B cell (primary cell): ENCODE measurements at regions of chr7 and their contacts with region 1.

Region 1: GRCh38 chr7:151172273-151173141 is 5.0 kb upstream of the GBX1 start:
- DNase-seq: peak; percentile 83
- ATAC-seq: peak; percentile 87
- H3K4me3 ChIP-seq: no peak overlapping the region
- H3K4me3 Mint-ChIP-seq: no peak overlapping the region
- H3K27ac ChIP-seq: no peak overlapping the region
- H3K27ac Mint-ChIP-seq: no peak overlapping the region
- H3K4me1 ChIP-seq: peaks cover 2 to 7% of the 10 kb centered on the region in 2 donors
- H3K4me1 Mint-ChIP-seq: peaks cover 13% of the 10 kb centered on the region
- H3K27me3 ChIP-seq: peaks cover 0 to 51% (median 22%) of the 10 kb centered on the region in 4 experiments
- H3K27me3 Mint-ChIP-seq: peaks cover 53% of the 10 kb centered on the region
- CTCF ChIP-seq: peak; percentile 100

Region 2: GRCh38 chr7:151104411-151105235 is 67.9 kb before region 1 on chr7:
- CTCF ChIA-PET with region 1: no interaction called
- POLR2A ChIA-PET with region 1: no interaction called
- intact Hi-C with region 1: no loop called
- DNase-seq: no peak
- ATAC-seq: no peak
- H3K4me3 ChIP-seq: no peak overlapping the region
- H3K4me3 Mint-ChIP-seq: no peak overlapping the region
- H3K27ac ChIP-seq: no peak overlapping the region
- H3K27ac Mint-ChIP-seq: no peak overlapping the region
- H3K4me1 ChIP-seq: no peaks in the 10 kb centered on the region
- H3K4me1 Mint-ChIP-seq: no peaks in the 10 kb centered on the region
- H3K27me3 ChIP-seq: peaks cover 0 to 2% (median 0%) of the 10 kb centered on the region in 4 experiments
- H3K27me3 Mint-ChIP-seq: peaks cover 10% of the 10 kb centered on the region
- CTCF ChIP-seq: no peak

Region 3: DNA sequence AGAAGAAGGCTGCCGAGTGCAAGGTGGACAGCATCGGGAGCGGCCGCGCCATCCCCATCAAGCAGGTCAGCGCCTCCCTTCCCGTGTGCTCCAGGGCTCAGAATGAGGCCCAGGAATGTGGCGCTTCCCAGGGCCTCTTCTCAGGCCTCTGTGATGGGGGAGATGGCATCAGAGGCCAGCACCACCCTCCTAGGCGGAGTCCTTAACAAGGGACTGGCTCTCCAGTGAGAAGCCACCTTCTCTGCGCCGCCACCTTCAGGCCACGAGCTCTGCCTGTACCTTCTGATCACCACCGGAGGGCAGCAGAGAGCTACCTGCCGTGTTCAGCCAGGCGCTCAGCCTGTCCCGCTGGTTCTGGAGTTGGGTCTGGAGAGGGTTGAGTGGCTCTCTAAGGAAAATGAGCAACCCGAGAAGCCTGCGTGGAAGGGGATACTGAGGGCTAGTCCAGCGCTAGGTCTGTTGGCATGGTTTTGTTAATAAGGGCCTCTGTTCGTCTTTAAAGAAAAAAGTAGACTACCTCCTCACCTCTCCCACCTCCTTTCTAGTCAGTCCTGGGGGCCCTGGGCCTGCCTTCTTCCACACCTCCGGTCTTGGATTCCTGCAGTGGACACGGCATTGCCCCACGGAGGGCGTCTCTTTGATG is 48.6 kb before region 1 on chr7:
- CTCF ChIA-PET with region 1: interaction called, 5 read pairs
- POLR2A ChIA-PET with region 1: no interaction called
- intact Hi-C with region 1: loop called (anchors 1 kb)
- DNase-seq: peak; percentile 85
- ATAC-seq: peak; percentile 98
- H3K4me3 ChIP-seq: no peak overlapping the region
- H3K4me3 Mint-ChIP-seq: no peak overlapping the region
- H3K27ac ChIP-seq: no peak overlapping the region
- H3K27ac Mint-ChIP-seq: no peak overlapping the region
- H3K4me1 ChIP-seq: peaks cover 0 to 6% of the 10 kb centered on the region in 2 donors
- H3K4me1 Mint-ChIP-seq: peaks cover 3% of the 10 kb centered on the region
- H3K27me3 ChIP-seq: no peaks in the 10 kb centered on the region
- H3K27me3 Mint-ChIP-seq: peaks cover 3% of the 10 kb centered on the region
- CTCF ChIP-seq: peak; percentile 93

Region 4: GRCh38 chr7:151157645-151158329 is 14.7 kb before region 1 on chr7:
- CTCF ChIA-PET with region 1: interaction called, 10 read pairs
- POLR2A ChIA-PET with region 1: no interaction called
- intact Hi-C with region 1: no loop called
- DNase-seq: no peak
- ATAC-seq: no peak
- H3K4me3 ChIP-seq: no peak overlapping the region
- H3K4me3 Mint-ChIP-seq: no peak overlapping the region
- H3K27ac ChIP-seq: no peak overlapping the region
- H3K27ac Mint-ChIP-seq: no peak overlapping the region
- H3K4me1 ChIP-seq: no peaks in the 10 kb centered on the region
- H3K4me1 Mint-ChIP-seq: no peaks in the 10 kb centered on the region
- H3K27me3 ChIP-seq: peaks cover 0 to 20% (median 12%) of the 10 kb centered on the region in 4 experiments
- H3K27me3 Mint-ChIP-seq: peaks cover 32% of the 10 kb centered on the region
- CTCF ChIP-seq: no peak

Region 5: GRCh38 chr7:151232091-151232916 is 59.8 kb after region 1 on chr7 and contains the start of gene CHPF2:
- CTCF ChIA-PET with region 1: no interaction called
- POLR2A ChIA-PET with region 1: no interaction called
- intact Hi-C with region 1: loop called (anchors 2 kb)
- DNase-seq: peak; percentile 91
- ATAC-seq: peak; percentile 94
- H3K4me3 ChIP-seq: peak within 1 kb of the TSS; percentile 64 to 96 (median 93)
- H3K4me3 Mint-ChIP-seq: peak within 1 kb of the TSS; percentile 99
- H3K27ac ChIP-seq: peak within 1 kb of the TSS; percentile 53 to 68
- H3K27ac Mint-ChIP-seq: peak within 1 kb of the TSS; percentile 97
- H3K4me1 ChIP-seq: peaks cover 22 to 30% of the 10 kb centered on the region in 2 donors
- H3K4me1 Mint-ChIP-seq: peaks cover 43% of the 10 kb centered on the region
- H3K27me3 ChIP-seq: no peaks in the 10 kb centered on the region
- H3K27me3 Mint-ChIP-seq: no peaks in the 10 kb centered on the region
- CTCF ChIP-seq: no peak
- total RNA-seq, gene CHPF2: 39.4 and 44.0 TPM in 2 replicates

Region 6: DNA sequence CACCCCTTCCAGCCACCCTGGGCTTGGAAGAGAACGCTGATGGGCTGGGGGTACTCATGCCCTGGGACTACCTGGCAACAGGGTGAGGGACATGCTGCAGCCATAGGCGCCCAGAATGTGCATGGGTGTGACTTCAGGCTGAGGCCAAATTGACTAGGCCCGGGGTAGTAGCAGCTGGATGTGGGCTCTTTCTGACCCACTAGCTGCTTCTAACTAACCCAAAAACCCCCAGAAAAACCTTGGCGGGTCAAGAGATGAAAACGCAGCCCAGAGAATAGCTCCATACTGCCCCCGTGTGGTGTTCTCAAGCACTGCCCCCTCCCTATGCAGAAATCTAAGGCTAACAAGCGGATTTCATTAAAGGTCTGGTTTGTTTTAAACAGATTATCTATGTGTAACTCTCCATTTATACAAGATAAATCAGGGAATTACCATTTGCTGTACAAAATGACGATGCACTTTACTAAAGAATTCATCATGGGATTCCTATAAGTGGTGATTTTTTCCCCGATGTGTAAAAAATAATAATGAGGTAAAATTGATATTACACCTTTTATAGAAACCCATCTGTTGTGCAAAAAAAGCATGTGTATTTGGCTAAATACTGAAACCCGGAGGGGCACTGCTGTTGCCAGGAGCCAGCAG is 71.8 kb after region 1 on chr7:
- CTCF ChIA-PET with region 1: interaction called, 4 read pairs
- POLR2A ChIA-PET with region 1: no interaction called
- intact Hi-C with region 1: loop called (anchors 2 kb)
- DNase-seq: peak; percentile 68
- ATAC-seq: peak; percentile 12
- H3K4me3 ChIP-seq: peak overlapping the region in 3 of 5 experiments; percentile 47 to 55 (median 51)
- H3K4me3 Mint-ChIP-seq: peak overlapping the region; percentile 81
- H3K27ac ChIP-seq: no peak overlapping the region
- H3K27ac Mint-ChIP-seq: no peak overlapping the region
- H3K4me1 ChIP-seq: peaks cover 41 to 47% of the 10 kb centered on the region in 2 donors
- H3K4me1 Mint-ChIP-seq: peaks cover 41% of the 10 kb centered on the region
- H3K27me3 ChIP-seq: peaks cover 0 to 40% (median 17%) of the 10 kb centered on the region in 4 experiments
- H3K27me3 Mint-ChIP-seq: peaks cover 9% of the 10 kb centered on the region
- CTCF ChIP-seq: peak; percentile 79

Region 7: GRCh38 chr7:151304856-151305255 is 132.3 kb after region 1 on chr7:
- CTCF ChIA-PET with region 1: interaction called, 3 read pairs
- POLR2A ChIA-PET with region 1: no interaction called
- intact Hi-C with region 1: loop called (anchors 1 kb)
- DNase-seq: no peak
- ATAC-seq: no peak
- H3K4me3 ChIP-seq: no peak overlapping the region
- H3K4me3 Mint-ChIP-seq: no peak overlapping the region
- H3K27ac ChIP-seq: no peak overlapping the region
- H3K27ac Mint-ChIP-seq: no peak overlapping the region
- H3K4me1 ChIP-seq: peaks cover 7 to 13% of the 10 kb centered on the region in 2 donors
- H3K4me1 Mint-ChIP-seq: peaks cover 10% of the 10 kb centered on the region
- H3K27me3 ChIP-seq: peaks cover 0 to 57% (median 22%) of the 10 kb centered on the region in 4 experiments
- H3K27me3 Mint-ChIP-seq: peaks cover 37% of the 10 kb centered on the region
- CTCF ChIP-seq: no peak